WTC11 (cell line): ENCODE measurements at regions of chr17 and their contacts with region 1.

Region 1: DNA sequence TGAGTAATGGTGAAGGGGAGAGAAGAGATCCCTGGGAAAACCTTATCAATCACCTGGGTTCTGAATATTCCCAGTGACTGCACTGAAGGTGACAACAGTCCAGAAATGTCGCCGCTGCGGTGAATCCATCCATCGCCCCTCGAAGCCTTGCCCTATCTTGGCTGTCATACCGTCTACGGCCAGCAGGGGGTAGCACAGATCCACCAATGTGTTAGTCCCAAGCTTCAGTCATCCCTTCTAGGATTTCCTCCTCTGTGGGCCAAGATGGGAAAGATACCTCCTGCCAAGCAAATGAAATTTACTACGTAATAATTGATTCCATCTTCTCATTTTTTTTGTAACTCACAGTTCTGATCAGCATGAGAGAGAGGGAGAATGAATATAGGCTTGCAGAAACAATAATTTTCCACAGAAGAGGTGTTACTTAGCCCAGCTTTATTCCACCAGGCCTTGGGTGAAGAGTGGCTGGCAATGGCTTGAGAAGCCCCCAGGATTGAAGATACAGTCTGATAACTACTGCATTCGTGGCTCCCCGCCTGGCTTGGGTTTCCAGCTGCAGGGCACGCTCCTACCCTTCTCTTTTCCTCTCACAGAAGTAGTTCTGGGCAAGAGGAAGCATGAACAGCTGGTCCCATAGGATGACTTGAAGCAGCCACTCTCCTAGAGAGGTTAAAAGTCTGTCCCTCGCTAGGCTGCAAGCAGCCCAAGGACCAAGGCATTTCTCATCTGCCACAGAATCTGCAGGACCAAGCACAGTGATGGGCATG is 2.6 kb upstream of the FMNL1 start:
- DNase-seq: peak; percentile 95
- ATAC-seq: peak; percentile 54
- H3K4me3 Mint-ChIP-seq: peak overlapping the region; percentile 38
- H3K27ac Mint-ChIP-seq: no peak overlapping the region
- H3K4me1 Mint-ChIP-seq: peaks cover 7% of the 10 kb centered on the region; the same call in 1 of the 2 replicates
- H3K27me3 Mint-ChIP-seq: peaks cover 60% of the 10 kb centered on the region
- CTCF ChIP-seq: peak; percentile 98

Region 2: GRCh38 chr17:45197555-45198334 is 21.3 kb before region 1 on chr17:
- CTCF ChIA-PET with region 1: interaction called, 14 read pairs
- POLR2A ChIA-PET with region 1: no interaction called
- DNase-seq: peak; percentile 99
- ATAC-seq: peak; percentile 98
- H3K4me3 Mint-ChIP-seq: no peak overlapping the region
- H3K27ac Mint-ChIP-seq: peak overlapping the region; percentile 84
- H3K4me1 Mint-ChIP-seq: peaks cover 18% of the 10 kb centered on the region
- H3K27me3 Mint-ChIP-seq: peaks cover under 1% of the 10 kb centered on the region; the same call in 1 of the 2 replicates
- CTCF ChIP-seq: peak; percentile 94

Region 3: DNA sequence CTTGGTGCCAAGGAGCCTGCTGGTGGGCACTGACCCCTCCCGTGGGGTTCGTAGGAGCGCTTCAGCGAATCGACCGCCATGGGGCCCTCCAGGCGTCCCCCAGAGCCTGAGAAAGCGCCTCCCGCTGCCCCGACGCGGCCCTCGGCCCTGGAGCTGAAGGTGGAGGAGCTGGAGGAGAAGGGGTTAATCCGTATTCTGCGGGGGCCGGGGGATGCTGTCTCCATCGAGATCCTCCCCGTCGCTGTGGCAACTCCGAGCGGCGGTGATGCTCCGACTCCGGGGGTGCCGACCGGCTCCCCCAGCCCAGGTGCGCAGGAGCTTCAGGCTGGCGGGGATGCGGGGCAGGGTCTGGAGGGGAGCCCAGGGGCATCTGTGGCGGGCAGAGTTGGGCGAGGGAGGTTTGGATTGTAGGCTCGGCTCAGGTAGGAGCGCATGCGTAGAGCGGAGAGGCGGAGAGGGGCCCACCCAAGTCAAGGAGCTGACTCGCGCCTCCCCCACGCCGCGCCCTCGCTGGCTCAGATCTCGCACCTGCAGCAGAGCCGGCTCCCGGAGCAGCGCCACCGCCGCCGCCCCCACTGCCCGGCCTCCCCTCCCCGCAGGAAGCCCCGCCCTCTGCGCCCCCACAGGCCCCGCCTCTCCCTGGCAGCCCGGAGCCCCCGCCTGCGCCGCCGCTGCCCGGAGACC is 22.4 kb after region 1 on chr17:
- CTCF ChIA-PET with region 1: interaction called, 88 read pairs
- POLR2A ChIA-PET with region 1: interaction called, 4 read pairs
- DNase-seq: peak; percentile 79
- ATAC-seq: peak; percentile 55
- H3K4me3 Mint-ChIP-seq: peak overlapping the region; percentile 77
- H3K27ac Mint-ChIP-seq: no peak overlapping the region
- H3K4me1 Mint-ChIP-seq: peaks cover 12% of the 10 kb centered on the region
- H3K27me3 Mint-ChIP-seq: peaks cover 48% of the 10 kb centered on the region
- CTCF ChIP-seq: no peak

Region 4: DNA sequence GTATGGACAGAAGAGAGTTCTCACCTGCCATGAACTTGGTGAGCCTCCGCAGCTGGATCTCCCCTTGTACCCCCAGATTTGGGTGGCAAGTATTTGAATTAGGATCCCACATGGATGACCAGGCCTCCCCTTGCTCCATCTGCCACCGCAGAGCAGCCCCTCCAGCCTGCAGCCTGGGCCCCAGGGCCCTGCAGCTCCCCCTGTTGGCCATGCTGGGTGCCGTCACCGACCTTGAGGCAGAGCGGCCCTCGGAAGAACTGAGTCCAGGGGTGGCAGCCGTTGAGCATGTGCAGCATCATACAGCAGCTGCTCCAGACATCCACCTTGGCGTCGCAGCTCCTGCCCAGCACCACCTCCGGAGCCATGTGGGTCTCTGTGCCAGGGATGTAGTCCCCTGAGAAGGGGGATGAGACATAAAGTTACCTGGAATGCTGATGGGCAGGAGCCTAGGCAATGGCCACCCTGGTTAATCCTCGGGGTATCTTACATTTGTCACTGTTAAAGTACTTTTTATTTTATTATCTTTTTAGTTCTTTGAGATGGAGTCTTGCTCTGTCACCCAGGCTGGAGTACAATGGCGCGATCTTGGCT is 51.8 kb after region 1 on chr17:
- CTCF ChIA-PET with region 1: interaction called, 30 read pairs
- POLR2A ChIA-PET with region 1: no interaction called
- DNase-seq: peak; percentile 81
- ATAC-seq: peak; percentile 94
- H3K4me3 Mint-ChIP-seq: no peak overlapping the region
- H3K27ac Mint-ChIP-seq: no peak overlapping the region
- H3K4me1 Mint-ChIP-seq: peaks cover 8% of the 10 kb centered on the region
- H3K27me3 Mint-ChIP-seq: no peaks in the 10 kb centered on the region
- CTCF ChIP-seq: peak; percentile 79

Region 5: DNA sequence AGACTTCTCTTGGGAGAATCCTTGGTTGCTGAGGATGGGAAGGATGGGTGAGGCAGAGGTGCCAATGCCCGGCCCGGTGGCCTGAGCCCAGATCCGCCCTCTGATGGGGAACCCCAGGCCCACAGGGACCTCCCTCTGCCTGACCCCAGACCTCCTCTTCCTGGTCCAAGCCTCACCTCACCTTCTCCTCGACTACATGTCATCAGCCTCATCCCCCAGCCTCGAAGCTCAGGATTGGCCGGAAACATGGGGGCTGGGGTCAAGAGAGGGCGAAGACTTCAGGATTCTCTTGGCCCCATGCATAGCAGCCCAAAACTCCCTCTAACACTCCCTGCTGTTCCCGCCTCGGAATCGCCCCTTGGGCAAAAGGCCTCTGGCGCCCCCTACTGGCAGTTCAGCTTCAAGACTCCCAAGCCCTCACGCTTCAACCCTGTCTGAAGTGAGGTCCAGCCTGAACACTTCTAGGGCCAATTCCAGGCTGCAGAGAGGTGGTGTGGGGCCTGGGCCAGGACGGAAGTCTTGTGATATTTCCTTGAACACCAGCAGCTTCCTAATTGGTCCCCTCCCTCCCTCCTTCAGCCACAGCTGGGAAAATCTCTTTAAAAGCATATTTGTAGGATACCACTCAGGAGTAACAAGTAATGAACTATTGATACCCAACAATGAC is 166.4 kb after region 1 on chr17:
- CTCF ChIA-PET with region 1: interaction called, 17 read pairs
- POLR2A ChIA-PET with region 1: no interaction called
- DNase-seq: peak; percentile 94
- ATAC-seq: peak; percentile 86
- H3K4me3 Mint-ChIP-seq: no peak overlapping the region
- H3K27ac Mint-ChIP-seq: no peak overlapping the region
- H3K4me1 Mint-ChIP-seq: peaks cover 24% of the 10 kb centered on the region
- H3K27me3 Mint-ChIP-seq: peaks cover 16% of the 10 kb centered on the region
- CTCF ChIP-seq: peak; percentile 98

Region 6: GRCh38 chr17:45428050-45428617 is 209.1 kb after region 1 on chr17:
- CTCF ChIA-PET with region 1: interaction called, 18 read pairs
- POLR2A ChIA-PET with region 1: no interaction called
- DNase-seq: peak; percentile 86
- ATAC-seq: peak; percentile 15
- H3K4me3 Mint-ChIP-seq: peak overlapping the region; percentile 67
- H3K27ac Mint-ChIP-seq: no peak overlapping the region
- H3K4me1 Mint-ChIP-seq: peaks cover 36% of the 10 kb centered on the region
- H3K27me3 Mint-ChIP-seq: peaks cover 57% of the 10 kb centered on the region
- CTCF ChIP-seq: peak; percentile 99